GM10248 (cell line): ENCODE measurements at regions of chr2 and their contacts with region 1.

Region 1: DNA sequence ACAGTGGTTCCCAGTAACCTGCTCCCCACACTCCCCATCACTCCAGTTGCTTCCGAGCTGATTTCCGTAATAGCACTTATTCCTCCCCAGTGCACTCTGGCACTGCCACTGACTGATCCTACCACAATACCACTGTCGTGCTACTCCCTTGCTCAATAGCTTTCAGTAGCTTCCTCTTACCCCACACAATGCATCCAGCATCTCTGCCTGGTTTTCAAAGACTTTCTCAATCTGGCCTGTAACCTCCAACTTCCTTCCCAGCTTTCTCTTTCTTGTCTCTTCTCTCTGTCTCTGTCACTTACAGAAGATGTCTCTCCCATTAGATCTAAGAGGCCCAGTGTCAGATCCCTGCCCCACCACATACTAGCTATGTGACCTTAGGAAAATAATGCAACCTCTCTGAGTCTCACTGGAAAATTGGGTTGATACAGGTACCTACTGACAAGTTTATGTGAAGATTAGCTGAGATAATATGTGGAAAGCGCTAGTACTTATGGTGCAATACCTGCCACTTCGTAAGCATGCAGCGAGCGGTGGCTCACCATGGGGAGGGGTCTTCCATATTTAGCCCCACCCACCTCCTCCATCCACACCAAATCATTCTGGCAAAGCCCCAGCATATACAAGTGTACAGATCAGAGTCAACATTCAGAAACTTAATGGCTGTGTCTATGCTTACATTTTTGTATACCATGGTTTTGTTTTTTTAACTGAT is 36.7 kb downstream of the SFXN5 start:
- DNase-seq: no peak
- CTCF ChIP-seq: no peak

Region 2: GRCh38 chr2:73053316-73054114 is 18.7 kb after region 1 on chr2:
- CTCF ChIA-PET with region 1: no interaction called
- POLR2A ChIA-PET with region 1: no interaction called
- DNase-seq: no peak
- CTCF ChIP-seq: no peak

Region 3: GRCh38 chr2:73063909-73064875 is 29.4 kb after region 1 on chr2:
- CTCF ChIA-PET with region 1: no interaction called
- POLR2A ChIA-PET with region 1: interaction called, 13 read pairs
- DNase-seq: no peak
- CTCF ChIP-seq: no peak

Region 4: DNA sequence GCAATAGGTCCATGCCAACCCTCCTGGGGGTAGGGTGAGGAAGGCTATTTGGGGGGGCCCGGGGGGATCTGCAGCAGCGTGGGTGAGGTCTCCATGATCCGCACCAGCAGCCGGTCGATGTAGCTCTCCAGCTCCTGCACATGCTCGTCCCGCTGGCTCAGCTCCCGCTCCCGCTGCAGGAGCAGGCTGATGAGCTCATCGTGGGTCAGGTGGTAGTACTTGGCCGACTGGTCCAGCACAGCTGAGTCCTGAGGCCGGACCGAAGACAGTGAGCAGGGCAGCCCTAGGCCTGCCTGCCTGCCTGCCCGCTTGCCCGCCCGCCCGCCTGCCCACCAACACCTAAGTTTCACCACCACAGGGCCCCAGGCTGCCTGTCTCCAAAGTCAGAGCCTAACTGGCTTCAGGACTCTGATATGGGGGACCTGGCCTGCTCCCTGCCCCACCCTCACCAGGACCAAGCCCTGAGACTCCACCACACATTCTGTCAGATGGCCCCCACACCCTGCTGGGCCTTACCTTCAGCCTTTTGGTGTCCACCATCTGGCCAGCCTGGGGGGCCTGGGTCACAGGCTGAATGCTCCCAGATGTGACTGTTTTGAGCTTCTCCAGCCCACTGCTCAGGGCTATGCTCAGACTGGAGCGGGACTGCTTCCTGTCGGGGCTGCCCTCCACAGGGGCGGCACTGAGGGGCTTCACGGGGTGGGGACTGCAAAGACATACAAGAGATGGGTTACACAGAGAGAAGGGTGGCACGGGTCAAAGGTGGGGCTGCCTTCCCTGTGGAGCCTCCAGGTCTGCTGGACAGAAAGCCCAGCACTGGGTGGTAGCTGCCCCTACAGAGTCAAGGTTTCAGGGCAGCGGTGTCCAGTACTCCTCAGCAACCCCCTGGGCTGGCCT is 40.9 kb after region 1 on chr2:
- CTCF ChIA-PET with region 1: no interaction called
- POLR2A ChIA-PET with region 1: no interaction called
- DNase-seq: no peak
- CTCF ChIP-seq: no peak